B cell (primary cell): ENCODE measurements at regions of chr5 and their contacts with region 1.

Region 1: DNA sequence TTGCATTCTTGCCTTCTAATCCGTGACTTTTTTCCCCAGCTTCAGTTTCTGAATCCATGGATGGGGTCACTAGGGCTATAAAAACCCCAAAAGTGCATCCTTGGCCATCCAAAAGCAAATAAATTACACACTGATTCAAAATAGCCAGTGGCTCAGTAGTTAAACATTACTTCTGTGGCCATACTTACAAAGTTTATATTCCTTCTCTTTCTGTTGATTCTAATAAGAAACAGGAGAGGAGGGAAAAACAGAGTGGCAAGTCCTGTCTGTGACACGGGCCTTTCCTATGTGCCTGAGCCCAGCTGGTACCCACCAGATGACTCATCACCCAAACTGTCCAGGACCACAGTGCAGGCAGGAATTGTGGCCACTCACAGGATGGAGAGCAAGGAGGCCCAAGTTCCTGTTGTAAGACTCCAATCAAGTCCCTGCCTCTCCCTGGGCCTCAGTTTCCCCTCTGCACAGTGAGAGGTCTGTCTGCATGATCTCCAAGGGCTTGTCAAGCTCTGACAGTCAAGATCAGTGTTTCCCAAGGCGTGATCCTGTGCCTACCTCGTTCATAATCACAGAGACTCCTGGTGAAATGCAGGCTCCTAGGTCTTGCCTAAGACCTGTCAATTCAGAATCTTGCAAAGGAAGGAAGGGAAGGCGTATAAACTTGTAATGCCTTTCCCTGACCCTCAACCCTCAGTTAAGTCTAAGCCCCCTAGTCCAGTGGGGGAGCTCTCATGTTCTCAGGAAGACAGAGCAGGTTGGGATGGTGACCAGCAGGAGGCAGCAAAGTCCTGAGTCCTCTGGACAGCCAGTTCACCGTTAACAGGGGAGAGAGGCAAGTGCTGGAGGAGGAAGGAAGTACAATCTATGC is 29.5 kb downstream of the TNIP1 start:
- DNase-seq: peak; percentile 86
- ATAC-seq: peak; percentile 90
- H3K4me3 ChIP-seq: no peak overlapping the region
- H3K4me3 Mint-ChIP-seq: no peak overlapping the region
- H3K27ac ChIP-seq: no peak overlapping the region
- H3K27ac Mint-ChIP-seq: peak overlapping the region; percentile 66
- H3K4me1 ChIP-seq: peaks cover 15 to 22% of the 10 kb centered on the region in 2 donors
- H3K4me1 Mint-ChIP-seq: peaks cover 27% of the 10 kb centered on the region
- H3K27me3 ChIP-seq: no peaks in the 10 kb centered on the region
- H3K27me3 Mint-ChIP-seq: no peaks in the 10 kb centered on the region
- CTCF ChIP-seq: peak; percentile 84

Region 2: GRCh38 chr5:150394131-150394530 is 657.2 kb before region 1 on chr5:
- CTCF ChIA-PET with region 1: no interaction called
- POLR2A ChIA-PET with region 1: no interaction called
- intact Hi-C with region 1: no loop called
- DNase-seq: peak; percentile 71
- ATAC-seq: no peak
- H3K4me3 ChIP-seq: no peak overlapping the region
- H3K4me3 Mint-ChIP-seq: no peak overlapping the region
- H3K27ac ChIP-seq: peak overlapping the region in 1 of 2 donors; percentile 37
- H3K27ac Mint-ChIP-seq: peak overlapping the region; percentile 37
- H3K4me1 ChIP-seq: peaks cover 3 to 8% of the 10 kb centered on the region in 2 donors
- H3K4me1 Mint-ChIP-seq: peaks cover 17% of the 10 kb centered on the region
- H3K27me3 ChIP-seq: no peaks in the 10 kb centered on the region
- H3K27me3 Mint-ChIP-seq: no peaks in the 10 kb centered on the region
- CTCF ChIP-seq: no peak

Region 3: DNA sequence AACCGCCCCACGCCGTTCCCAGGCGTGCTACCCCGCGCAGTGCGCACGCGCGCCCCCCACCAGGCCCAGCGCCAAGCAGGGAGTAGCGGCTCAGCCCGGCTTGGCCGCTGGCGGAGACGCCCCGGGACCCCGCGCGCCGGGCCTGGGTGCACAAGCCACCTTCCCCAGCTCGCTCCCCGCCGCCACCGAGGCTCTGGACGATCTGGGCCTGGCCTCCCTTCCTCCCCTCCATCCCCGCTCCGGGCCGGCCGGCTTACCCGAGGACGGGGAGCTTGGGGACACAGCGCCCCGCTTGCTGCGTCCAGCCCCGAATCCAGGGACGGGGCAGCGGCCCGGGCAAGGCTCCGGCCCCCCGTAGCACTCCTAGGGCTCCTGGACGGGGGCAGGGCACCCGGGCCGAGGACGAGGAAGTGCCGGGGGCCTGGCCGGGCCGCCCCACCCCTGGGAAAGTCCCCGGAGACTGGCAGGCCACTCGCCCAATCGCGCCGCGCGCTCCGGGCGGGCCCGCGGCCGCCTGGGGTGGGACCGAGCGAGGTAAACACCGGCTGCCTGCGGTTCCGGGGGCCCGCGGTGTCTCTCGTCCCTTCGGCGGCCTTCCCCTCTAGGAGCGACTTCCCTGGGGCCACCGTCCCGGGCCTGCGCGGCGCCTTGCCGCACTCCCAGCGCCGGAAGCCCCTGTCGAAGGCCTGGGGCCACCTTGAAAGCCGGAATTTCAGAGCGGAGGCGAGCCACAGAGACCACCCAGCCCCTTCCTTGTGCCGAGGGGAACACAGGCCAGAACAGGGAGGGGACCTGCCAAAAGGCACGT is 29.5 kb after region 1 on chr5 and contains the start of gene TNIP1:
- CTCF ChIA-PET with region 1: interaction called, 25 read pairs
- POLR2A ChIA-PET with region 1: no interaction called
- intact Hi-C with region 1: no loop called
- DNase-seq: peak; percentile 96
- ATAC-seq: peak; percentile 88
- H3K4me3 ChIP-seq: peak within 1 kb of the TSS; percentile 71 to 96 (median 85)
- H3K4me3 Mint-ChIP-seq: peak within 1 kb of the TSS; percentile 87
- H3K27ac ChIP-seq: peak within 1 kb of the TSS; percentile 96 to 100
- H3K27ac Mint-ChIP-seq: peak within 1 kb of the TSS; percentile 88
- H3K4me1 ChIP-seq: peaks cover 83 to 84% of the 10 kb centered on the region in 2 donors
- H3K4me1 Mint-ChIP-seq: peaks cover 82% of the 10 kb centered on the region
- H3K27me3 ChIP-seq: no peaks in the 10 kb centered on the region
- H3K27me3 Mint-ChIP-seq: no peaks in the 10 kb centered on the region
- CTCF ChIP-seq: no peak
- total RNA-seq, gene TNIP1: 294 and 295 TPM in 2 replicates

Region 4: DNA sequence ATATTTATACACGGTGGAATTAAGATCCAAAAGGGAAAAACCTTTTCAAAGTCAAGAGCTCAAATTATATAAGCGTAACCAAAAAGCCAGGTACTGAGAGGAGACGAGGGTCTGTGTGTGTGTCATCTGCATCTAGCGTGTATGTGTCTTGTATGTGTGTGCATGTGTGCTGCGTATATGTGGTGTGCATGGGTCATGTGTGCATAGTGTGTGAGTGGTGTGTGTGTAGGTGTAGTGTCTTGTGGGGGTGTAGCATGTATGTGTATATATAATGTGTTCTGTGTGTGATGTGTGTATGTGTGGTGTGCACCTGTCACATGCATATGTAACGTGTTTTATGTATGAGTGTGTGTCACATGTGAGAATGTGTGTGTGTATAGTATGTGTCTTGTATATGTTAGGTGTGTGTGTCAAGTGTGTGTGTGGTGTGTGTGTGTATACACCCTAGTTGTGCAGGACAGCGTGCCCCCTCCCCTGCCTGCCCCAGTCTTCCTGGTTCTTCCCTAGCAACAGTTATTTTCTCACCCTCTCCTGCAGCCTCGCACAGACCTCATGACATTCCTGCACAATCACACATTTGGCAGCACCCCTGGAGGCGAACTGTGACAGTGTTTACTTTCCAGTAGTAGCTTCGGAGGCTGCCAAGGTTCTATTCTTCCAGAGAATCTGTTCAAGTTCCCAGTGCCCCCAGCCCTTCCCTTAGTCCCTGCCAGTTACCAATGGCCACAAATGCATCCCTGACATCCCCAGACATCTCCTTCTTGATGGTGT is 56.6 kb after region 1 on chr5:
- CTCF ChIA-PET with region 1: interaction called, 918 read pairs
- POLR2A ChIA-PET with region 1: no interaction called
- intact Hi-C with region 1: no loop called
- DNase-seq: no peak
- ATAC-seq: no peak
- H3K4me3 ChIP-seq: no peak overlapping the region
- H3K4me3 Mint-ChIP-seq: no peak overlapping the region
- H3K27ac ChIP-seq: no peak overlapping the region
- H3K27ac Mint-ChIP-seq: no peak overlapping the region
- H3K4me1 ChIP-seq: peaks cover 4 to 20% of the 10 kb centered on the region in 2 donors
- H3K4me1 Mint-ChIP-seq: peaks cover 23% of the 10 kb centered on the region
- H3K27me3 ChIP-seq: no peaks in the 10 kb centered on the region
- H3K27me3 Mint-ChIP-seq: no peaks in the 10 kb centered on the region
- CTCF ChIP-seq: no peak

Region 5: DNA sequence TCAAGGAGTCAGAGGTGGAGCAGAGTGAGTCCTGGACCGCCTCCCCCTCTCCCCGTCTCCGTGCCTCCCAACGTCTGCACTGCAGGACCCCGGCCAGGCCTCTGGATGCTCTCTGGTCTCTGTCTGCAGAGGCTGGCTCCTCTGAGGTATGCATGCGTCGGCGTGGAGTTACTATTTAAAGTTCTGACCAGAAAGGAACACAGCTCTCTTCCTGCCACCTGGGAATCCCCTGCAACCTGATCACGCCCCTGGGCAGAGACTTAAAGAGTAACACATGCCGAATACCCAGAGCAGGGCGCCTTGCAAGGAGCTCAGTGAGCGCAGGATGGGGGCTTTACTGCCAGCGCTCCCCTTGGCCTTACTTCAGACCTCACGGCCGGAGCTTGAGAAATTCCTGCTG is 90.2 kb after region 1 on chr5:
- CTCF ChIA-PET with region 1: interaction called, 39 read pairs
- POLR2A ChIA-PET with region 1: no interaction called
- intact Hi-C with region 1: no loop called
- DNase-seq: peak; percentile 75
- ATAC-seq: peak; percentile 95
- H3K4me3 ChIP-seq: peak overlapping the region in 4 of 5 experiments; percentile 36 to 70 (median 52)
- H3K4me3 Mint-ChIP-seq: peak overlapping the region; percentile 83
- H3K27ac ChIP-seq: peak overlapping the region; percentile 79 to 91
- H3K27ac Mint-ChIP-seq: peak overlapping the region; percentile 91
- H3K4me1 ChIP-seq: peaks cover 63 to 87% of the 10 kb centered on the region in 2 donors
- H3K4me1 Mint-ChIP-seq: peaks cover 82% of the 10 kb centered on the region
- H3K27me3 ChIP-seq: no peaks in the 10 kb centered on the region
- H3K27me3 Mint-ChIP-seq: no peaks in the 10 kb centered on the region
- CTCF ChIP-seq: no peak

Region 6: DNA sequence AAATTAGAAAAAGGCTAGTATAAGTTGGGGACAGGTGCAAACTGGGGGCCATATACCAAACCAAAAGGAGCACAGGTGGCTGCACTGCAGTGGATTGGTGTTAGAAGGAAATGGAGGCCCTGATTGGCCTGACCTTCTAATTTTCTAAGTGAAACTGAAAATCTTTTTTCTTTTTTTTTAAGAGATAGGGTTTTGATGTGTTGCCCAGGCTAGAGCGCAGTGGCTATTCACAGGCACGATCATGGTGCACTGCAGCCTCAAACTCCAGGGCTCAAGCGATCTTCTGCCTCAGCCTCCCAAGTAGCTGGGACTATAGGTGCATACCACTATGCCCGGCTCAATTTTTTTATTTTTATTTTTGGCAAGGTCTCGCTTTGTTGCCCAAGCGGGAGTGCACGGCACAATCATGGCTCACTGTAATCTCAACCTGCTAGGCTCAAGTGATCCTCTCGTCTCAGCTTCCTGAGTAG is 182.4 kb after region 1 on chr5:
- CTCF ChIA-PET with region 1: interaction called, 60 read pairs
- POLR2A ChIA-PET with region 1: no interaction called
- intact Hi-C with region 1: no loop called
- DNase-seq: peak; percentile 67
- ATAC-seq: peak; percentile 52
- H3K4me3 ChIP-seq: peak overlapping the region in 3 of 5 experiments; percentile 2 to 32 (median 31)
- H3K4me3 Mint-ChIP-seq: peak overlapping the region; percentile 89
- H3K27ac ChIP-seq: peak overlapping the region; percentile 69 to 92
- H3K27ac Mint-ChIP-seq: peak overlapping the region; percentile 95
- H3K4me1 ChIP-seq: peaks cover 67 to 72% of the 10 kb centered on the region in 2 donors
- H3K4me1 Mint-ChIP-seq: peaks cover 76% of the 10 kb centered on the region
- H3K27me3 ChIP-seq: no peaks in the 10 kb centered on the region
- H3K27me3 Mint-ChIP-seq: no peaks in the 10 kb centered on the region
- CTCF ChIP-seq: no peak

Region 7: GRCh38 chr5:151447174-151448037 is 396.1 kb after region 1 on chr5 and contains the start of gene SLC36A1:
- CTCF ChIA-PET with region 1: no interaction called
- POLR2A ChIA-PET with region 1: no interaction called
- intact Hi-C with region 1: loop called (anchors 10 kb)
- DNase-seq: peak; percentile 95
- ATAC-seq: peak; percentile 98
- H3K4me3 ChIP-seq: peak within 1 kb of the TSS; percentile 77 to 94 (median 84)
- H3K4me3 Mint-ChIP-seq: peak within 1 kb of the TSS; percentile 93
- H3K27ac ChIP-seq: peak within 1 kb of the TSS; percentile 66 to 80
- H3K27ac Mint-ChIP-seq: peak within 1 kb of the TSS; percentile 97
- H3K4me1 ChIP-seq: peaks cover 11 to 12% of the 10 kb centered on the region in 2 donors
- H3K4me1 Mint-ChIP-seq: peaks cover 25% of the 10 kb centered on the region
- H3K27me3 ChIP-seq: peaks cover 0 to 7% (median 2%) of the 10 kb centered on the region in 4 experiments
- H3K27me3 Mint-ChIP-seq: peaks cover 20% of the 10 kb centered on the region
- CTCF ChIP-seq: peak; percentile 95
- total RNA-seq, gene SLC36A1: 12.9 and 15.1 TPM in 2 replicates